ENCODE measurements at regions of chr1 and their contacts with region 1.

Region 1: DNA sequence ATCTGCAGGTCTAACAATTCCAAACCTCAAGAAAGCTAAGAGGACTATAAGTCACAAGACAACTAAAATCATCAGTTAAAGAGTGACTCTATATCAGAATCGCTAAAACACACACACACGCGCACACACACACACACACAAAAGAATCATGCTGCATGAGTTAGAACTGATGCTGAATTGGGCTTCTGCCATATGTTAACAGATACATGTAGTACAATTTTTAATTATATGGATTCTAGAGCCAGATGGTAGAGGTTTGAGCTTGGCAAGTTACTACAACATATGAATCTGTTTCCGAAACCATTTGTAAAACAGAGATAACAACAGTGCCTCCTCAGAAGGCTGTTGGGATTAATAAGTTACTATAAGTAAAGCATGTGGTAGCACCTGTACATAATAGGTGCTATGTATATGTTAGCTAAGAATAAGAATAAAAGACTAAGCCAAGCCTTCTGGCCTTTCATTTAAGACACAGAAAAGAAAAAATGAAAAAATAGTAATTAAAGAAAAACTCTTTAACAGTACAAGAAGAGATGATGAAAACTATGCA is 17.9 kb downstream of the EPRS1 start:
- DNase-seq: no peak
- H3K4me3 Mint-ChIP-seq: no peak overlapping the region
- H3K27ac Mint-ChIP-seq: no peak overlapping the region
- H3K4me1 Mint-ChIP-seq: no peaks in the 10 kb centered on the region
- H3K27me3 Mint-ChIP-seq: no peaks in the 10 kb centered on the region
- CTCF ChIP-seq: no peak

Region 2: GRCh38 chr1:219985169-219985568 is 43.3 kb before region 1 on chr1:
- CTCF ChIA-PET with region 1: no interaction called
- intact Hi-C with region 1: loop called (anchors 1 kb)
- DNase-seq: no peak
- H3K4me3 Mint-ChIP-seq: no peak overlapping the region
- H3K27ac Mint-ChIP-seq: no peak overlapping the region
- H3K4me1 Mint-ChIP-seq: no peaks in the 10 kb centered on the region
- H3K27me3 Mint-ChIP-seq: no peaks in the 10 kb centered on the region
- CTCF ChIP-seq: no peak